MCF 10A (cell line): ENCODE measurements at regions of chr7 and their contacts with region 1.

Region 1: DNA sequence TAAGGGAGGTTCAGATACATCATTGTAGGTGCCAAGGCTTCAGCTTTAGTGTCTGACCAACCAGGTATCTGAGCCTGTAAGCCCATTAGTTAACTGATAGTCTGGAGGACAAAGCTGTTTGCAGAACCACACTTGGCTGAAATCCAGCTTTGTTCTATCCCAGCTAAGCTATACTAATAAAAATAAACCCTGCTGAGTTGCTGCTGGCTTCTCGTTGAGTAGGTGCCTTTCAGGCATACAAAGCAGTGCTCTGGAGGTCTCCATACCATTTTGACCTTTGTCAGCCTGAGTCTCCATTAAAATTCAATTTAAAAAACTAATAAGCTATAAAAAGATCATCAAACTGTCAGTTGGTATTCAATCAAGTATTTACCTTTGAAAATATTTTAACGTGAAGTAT is 22.0 kb downstream of the CDCA7L start:
- DNase-seq: peak; percentile 38
- H3K4me3 Mint-ChIP-seq: no peak overlapping the region
- H3K27ac Mint-ChIP-seq: no peak overlapping the region
- H3K4me1 Mint-ChIP-seq: peaks cover 10% of the 10 kb centered on the region
- H3K27me3 Mint-ChIP-seq: no peaks in the 10 kb centered on the region
- CTCF ChIP-seq: no peak

Region 2: DNA sequence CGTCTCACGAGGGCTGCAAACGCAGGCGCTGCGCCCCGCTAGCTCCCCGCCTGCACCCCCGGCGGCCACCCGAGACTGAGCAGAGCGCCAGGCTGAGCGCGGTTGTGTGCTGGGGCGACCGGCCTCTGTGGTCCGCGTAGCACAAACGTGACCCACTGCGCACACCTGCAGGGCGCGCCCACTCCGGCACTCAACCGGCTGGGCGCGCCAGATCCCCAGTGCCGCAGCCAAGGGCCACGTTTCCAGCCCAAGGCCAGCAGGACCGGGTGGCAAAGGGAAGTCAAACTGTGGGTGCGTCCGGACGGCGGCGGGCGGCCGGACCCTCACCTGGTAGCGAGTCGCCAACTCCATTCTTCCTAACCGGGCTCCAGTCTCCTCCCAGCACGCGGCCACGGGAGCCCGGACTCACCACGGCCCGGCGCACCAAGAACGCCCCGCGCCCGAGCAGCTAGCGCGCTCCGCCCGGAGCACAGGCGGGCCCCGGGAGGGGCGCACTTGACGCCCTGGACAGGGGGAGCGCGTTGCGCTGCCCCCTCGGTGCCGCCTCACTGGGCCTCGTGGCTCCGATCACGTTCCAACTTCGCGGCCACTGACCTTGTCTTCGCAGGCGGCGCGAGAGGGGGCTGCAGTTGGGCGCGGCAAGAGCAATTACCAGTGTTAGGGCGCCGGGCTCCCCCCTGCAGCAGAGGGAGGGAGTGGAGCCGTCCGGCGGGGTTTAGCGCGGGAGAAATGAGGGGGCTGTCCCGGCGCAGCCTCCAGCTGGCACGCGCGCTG is 22.0 kb after region 1 on chr7 and contains the start of gene CDCA7L:
- CTCF ChIA-PET with region 1: interaction called, 5 read pairs
- POLR2A ChIA-PET with region 1: interaction called, 16 read pairs
- intact Hi-C with region 1: no loop called
- DNase-seq: peak; percentile 90
- H3K4me3 Mint-ChIP-seq: peak within 1 kb of the TSS; percentile 81
- H3K27ac Mint-ChIP-seq: peak within 1 kb of the TSS; percentile 98
- H3K4me1 Mint-ChIP-seq: peaks cover 30% of the 10 kb centered on the region
- H3K27me3 Mint-ChIP-seq: no peaks in the 10 kb centered on the region
- CTCF ChIP-seq: no peak
- total RNA-seq, gene CDCA7L: 21.7 and 43.6 TPM in 2 replicates